ENCODE measurements at regions of chr10 and their contacts with region 1.

Region 1: DNA sequence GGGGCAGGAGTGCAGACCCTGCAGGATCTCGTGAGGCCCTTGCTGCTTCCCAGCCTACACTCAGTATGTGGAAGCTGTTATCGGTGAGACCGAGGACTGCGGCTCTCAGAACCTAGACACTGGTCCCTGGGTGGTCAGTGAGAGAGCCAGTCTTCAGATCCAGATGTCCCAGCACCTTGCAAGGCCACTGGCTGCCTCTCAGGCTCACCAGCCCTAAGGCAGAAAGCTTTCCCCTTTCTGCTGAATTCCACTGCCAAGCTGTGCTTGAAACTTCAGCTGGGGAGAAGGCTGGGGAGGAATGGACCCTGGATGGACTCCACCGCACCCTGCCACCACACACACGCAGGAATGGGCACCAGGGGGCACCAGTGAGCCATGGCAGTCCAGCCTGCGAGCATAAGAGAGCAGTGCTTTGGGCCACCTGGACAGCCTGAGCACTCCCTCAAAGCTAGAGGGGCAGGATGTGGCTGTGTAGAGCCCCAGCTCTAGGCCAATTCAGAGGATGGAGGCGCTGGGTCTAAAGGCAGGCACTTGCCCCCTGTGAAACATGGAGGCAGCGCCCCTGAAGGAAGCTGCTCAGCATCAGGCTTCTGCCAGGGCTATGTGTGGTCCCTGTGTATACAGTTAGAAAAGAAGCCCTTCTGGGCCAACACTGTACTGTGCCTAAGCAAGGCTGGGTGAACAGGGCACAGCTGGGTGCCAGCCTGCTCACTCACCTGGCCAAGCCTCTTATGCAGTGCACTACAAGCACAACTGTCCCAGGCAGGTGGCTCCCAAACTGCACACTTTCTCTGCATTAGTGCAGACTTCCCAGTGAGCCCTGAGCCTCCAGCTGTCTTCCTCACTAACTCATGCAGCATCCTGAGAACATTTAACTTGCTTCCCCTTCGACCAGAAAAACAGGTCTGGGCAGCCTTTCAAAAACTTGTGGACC is 21.6 kb downstream of the TMEM72 start:
- DNase-seq: peak; percentile 79
- H3K4me3 ChIP-seq: no peak overlapping the region; a peak in 1 of 4 replicates
- H3K27ac ChIP-seq: no peak overlapping the region
- H3K4me1 ChIP-seq: peaks cover 0 to 10% of the 10 kb centered on the region in 2 experiments; a peak in 2 of 4 replicates
- H3K27me3 ChIP-seq: peaks cover 8% of the 10 kb centered on the region; the same call in 1 of the 2 replicates
- CTCF ChIP-seq: peak; percentile 91
- EP300 ChIP-seq: no peak
- RAD21 ChIP-seq: peak; percentile 91

Region 2: DNA sequence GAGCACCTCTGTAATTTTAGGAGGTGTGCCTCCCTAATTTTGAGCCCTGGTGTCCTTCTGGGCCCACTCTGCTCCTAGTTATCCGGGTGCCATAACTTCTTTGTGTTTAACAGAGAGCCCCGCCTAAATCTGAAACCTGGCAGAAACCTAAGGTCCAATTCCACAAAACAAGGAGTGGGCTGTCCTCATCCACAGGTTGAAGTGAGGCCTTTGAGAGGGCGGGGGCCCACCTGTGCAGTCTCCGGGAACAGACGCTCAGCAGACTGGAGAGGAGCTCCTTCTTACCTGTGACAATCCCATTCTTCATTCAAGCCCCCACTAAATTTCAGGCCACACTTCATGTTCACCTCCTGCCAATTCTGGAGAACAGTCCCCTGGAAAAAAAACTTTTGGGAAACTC is 10.8 kb before region 1 on chr10:
- CTCF ChIA-PET with region 1: interaction called, 20 read pairs
- POLR2A ChIA-PET with region 1: no interaction called
- DNase-seq: no peak
- H3K4me3 ChIP-seq: no peak overlapping the region
- H3K27ac ChIP-seq: no peak overlapping the region
- H3K4me1 ChIP-seq: no peaks in the 10 kb centered on the region
- H3K27me3 ChIP-seq: peaks cover 32% of the 10 kb centered on the region
- CTCF ChIP-seq: no peak
- EP300 ChIP-seq: no peak
- RAD21 ChIP-seq: no peak

Region 3: DNA sequence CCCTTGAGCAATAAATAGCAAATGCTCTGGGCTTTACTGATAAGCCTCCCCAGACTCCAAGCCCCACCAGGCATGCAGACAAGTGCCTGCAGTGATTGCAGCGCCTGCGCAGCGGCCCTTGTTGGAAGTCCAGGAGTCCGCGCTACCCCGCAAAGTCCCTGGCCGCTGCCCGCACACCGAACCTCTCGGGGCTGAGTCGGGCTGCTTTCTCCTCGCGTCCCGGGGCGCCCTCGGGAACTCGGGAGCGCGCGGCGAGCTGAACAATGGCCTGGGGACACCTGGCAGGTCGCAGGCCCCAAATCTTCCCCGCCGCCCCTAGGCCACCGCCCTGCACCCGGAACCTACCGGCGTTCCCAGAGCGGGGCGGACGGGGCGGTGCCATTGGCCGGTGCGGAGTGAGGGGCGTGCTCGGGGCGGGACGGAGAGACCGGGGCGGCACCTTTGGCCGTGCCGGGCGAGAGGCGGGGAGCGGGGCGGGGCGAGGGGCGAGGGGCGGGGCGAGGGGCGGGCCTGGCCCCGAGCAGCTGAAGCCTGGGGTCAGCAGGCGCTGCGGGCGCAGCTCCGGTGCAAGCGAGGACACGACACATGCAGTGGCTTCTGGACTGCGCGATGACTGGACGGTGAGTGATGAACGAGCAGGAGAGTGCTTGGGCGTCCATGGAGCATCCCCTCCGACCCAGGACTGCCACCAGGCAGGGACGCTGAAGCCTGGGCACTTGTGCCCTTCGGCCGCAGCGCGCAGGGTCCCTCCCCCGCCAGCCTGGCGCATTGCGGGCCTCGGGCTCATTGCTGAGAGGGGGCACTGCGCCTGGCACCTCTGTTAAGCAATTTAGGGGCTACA is 26.7 kb after region 1 on chr10 and contains the start of gene RASSF4:
- CTCF ChIA-PET with region 1: interaction called, 81 read pairs
- POLR2A ChIA-PET with region 1: no interaction called
- DNase-seq: peak; percentile 99
- H3K4me3 ChIP-seq: peak within 1 kb of the TSS; percentile 83 to 89
- H3K27ac ChIP-seq: peak within 1 kb of the TSS; percentile 75 to 81
- H3K4me1 ChIP-seq: peaks cover 17 to 31% of the 10 kb centered on the region in 2 experiments; a peak in 3 of 4 replicates
- H3K27me3 ChIP-seq: no peaks in the 10 kb centered on the region
- CTCF ChIP-seq: no peak
- EP300 ChIP-seq: no peak
- RAD21 ChIP-seq: no peak
- polyA plus RNA-seq, gene RASSF4: 11.0 and 14.1 TPM in 2 replicates

Region 4: DNA sequence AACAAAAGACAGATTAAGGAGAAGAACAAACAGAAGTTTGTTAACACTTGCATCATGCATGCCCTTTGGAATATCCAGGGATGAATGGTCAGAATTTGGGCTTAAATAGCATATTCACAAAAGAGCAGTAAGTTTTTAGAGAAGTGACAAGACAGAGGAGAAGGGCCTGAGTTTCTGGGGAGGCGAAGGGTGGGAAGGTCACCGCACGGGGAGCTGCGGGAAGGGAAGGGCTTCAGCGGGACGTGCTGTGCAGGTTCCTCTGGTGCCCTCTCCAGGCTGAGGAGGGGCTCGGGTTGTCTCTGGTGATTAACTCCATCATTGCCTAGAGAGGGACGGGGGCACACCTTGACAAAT is 57.5 kb after region 1 on chr10:
- CTCF ChIA-PET with region 1: interaction called, 22 read pairs
- POLR2A ChIA-PET with region 1: no interaction called
- DNase-seq: no peak
- H3K4me3 ChIP-seq: no peak overlapping the region
- H3K27ac ChIP-seq: no peak overlapping the region
- H3K4me1 ChIP-seq: no peaks in the 10 kb centered on the region
- H3K27me3 ChIP-seq: no peaks in the 10 kb centered on the region
- CTCF ChIP-seq: no peak
- EP300 ChIP-seq: no peak
- RAD21 ChIP-seq: peak; percentile 42

Measured in SK-N-SH (cell line).